Caco-2 (cell line): ENCODE measurements at regions of chr9 and their contacts with region 1.

Region 1: GRCh38 chr9:84397151-84397728 is 56.7 kb upstream of the SLC28A3 start:
- DNase-seq: peak; percentile 58 to 61
- H3K4me3 ChIP-seq: no peak overlapping the region
- H3K4me3 Mint-ChIP-seq: no peak overlapping the region
- H3K27ac Mint-ChIP-seq: no peak overlapping the region
- H3K4me1 ChIP-seq: no peaks in the 10 kb centered on the region
- H3K4me1 Mint-ChIP-seq: no peaks in the 10 kb centered on the region
- H3K27me3 ChIP-seq: no peaks in the 10 kb centered on the region
- H3K27me3 Mint-ChIP-seq: no peaks in the 10 kb centered on the region
- CTCF ChIP-seq: peak; percentile 54 to 73

Region 2: DNA sequence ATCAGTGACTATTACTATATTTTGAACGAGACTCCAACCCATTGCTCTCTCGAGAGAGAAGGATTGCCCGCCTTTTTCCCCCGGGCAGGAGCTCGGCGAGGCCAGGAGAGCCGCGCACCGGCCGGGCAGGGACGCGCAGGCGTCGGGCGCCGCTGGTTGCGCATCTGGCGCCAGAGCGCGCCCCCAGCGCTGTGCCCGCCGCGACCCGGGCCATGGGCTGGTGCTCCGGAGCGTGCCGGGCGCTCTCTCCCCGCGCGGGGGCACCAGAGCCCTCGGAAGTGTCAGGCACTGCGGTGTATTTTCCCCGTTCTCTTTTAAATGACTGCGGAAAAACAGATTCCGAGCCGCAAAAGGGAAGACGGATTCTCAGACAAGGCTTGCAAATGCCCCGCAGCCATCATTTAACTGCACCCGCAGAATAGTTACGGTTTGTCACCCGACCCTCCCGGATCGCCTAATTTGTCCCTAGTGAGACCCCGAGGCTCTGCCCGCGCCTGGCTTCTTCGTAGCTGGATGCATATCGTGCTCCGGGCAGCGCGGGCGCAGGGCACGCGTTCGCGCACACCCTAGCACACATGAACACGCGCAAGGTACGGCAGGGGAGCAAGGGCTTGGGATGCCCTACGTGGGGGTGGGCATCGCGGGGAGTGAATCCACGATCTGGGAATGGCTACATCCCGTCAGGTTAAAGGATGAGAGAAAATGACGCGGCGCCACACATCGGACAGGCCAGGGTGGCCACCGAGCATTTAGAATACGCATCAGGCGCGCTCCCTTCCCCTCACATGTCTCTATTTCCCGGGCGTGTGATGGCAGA is 271.2 kb after region 1 on chr9:
- CTCF ChIA-PET with region 1: no interaction called
- POLR2A ChIA-PET with region 1: no interaction called
- intact Hi-C with region 1: loop called (anchors 10 kb)
- DNase-seq: peak in 1 of 2 experiments; percentile 61
- H3K4me3 ChIP-seq: peak overlapping the region; percentile 10; the same call in 1 of the 2 replicates
- H3K4me3 Mint-ChIP-seq: peak overlapping the region; percentile 66
- H3K27ac Mint-ChIP-seq: no peak overlapping the region
- H3K4me1 ChIP-seq: no peaks in the 10 kb centered on the region
- H3K4me1 Mint-ChIP-seq: no peaks in the 10 kb centered on the region
- H3K27me3 ChIP-seq: no peaks in the 10 kb centered on the region
- H3K27me3 Mint-ChIP-seq: peaks cover 22% of the 10 kb centered on the region
- CTCF ChIP-seq: peak in 1 of 2 experiments; percentile 35

Region 3: GRCh38 chr9:84781458-84781857 is 384.2 kb after region 1 on chr9:
- CTCF ChIA-PET with region 1: no interaction called
- POLR2A ChIA-PET with region 1: no interaction called
- intact Hi-C with region 1: loop called (anchors 1 kb)
- DNase-seq: peak in 1 of 2 experiments; percentile 3
- H3K4me3 ChIP-seq: no peak overlapping the region
- H3K4me3 Mint-ChIP-seq: no peak overlapping the region
- H3K27ac Mint-ChIP-seq: no peak overlapping the region
- H3K4me1 ChIP-seq: no peaks in the 10 kb centered on the region
- H3K4me1 Mint-ChIP-seq: no peaks in the 10 kb centered on the region
- H3K27me3 ChIP-seq: no peaks in the 10 kb centered on the region
- H3K27me3 Mint-ChIP-seq: peaks cover 6% of the 10 kb centered on the region
- CTCF ChIP-seq: peak in 1 of 2 experiments; percentile 25

Region 4: GRCh38 chr9:85212887-85213286 is 815.6 kb after region 1 on chr9:
- CTCF ChIA-PET with region 1: no interaction called
- POLR2A ChIA-PET with region 1: no interaction called
- intact Hi-C with region 1: no loop called
- DNase-seq: no peak
- H3K4me3 ChIP-seq: no peak overlapping the region
- H3K4me3 Mint-ChIP-seq: no peak overlapping the region
- H3K27ac Mint-ChIP-seq: no peak overlapping the region
- H3K4me1 ChIP-seq: no peaks in the 10 kb centered on the region
- H3K4me1 Mint-ChIP-seq: no peaks in the 10 kb centered on the region
- H3K27me3 ChIP-seq: no peaks in the 10 kb centered on the region
- H3K27me3 Mint-ChIP-seq: peaks cover 7% of the 10 kb centered on the region
- CTCF ChIP-seq: no peak

Region 5: DNA sequence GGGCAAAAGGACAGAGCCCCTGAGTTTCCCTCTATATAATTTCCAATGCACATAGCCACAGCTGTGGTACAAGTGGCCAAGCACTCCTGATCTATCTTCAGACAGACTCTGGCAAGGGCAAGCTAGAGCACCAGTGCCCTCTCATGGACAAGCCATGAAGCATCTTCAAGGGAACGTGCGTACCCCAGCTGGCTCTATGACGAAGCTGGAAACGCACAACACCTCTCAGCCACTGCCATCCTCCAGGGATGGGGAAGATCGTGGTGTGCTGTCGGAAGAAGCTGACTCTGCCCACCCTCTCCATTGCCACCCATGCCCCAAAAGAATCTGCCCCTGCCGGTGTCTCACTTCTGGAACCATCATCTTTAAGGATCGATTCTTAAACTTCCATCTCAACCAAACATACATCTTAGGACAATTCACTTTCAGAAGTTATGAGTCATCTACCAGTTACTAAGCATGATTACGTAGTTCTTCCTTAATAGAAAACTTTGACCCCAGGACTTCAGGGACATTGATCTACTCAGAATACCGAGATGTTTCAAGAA is 861.7 kb after region 1 on chr9:
- CTCF ChIA-PET with region 1: interaction called, 5 read pairs
- POLR2A ChIA-PET with region 1: no interaction called
- intact Hi-C with region 1: loop called (anchors 2 kb)
- DNase-seq: peak; percentile 42 to 45
- H3K4me3 ChIP-seq: no peak overlapping the region
- H3K4me3 Mint-ChIP-seq: no peak overlapping the region
- H3K27ac Mint-ChIP-seq: no peak overlapping the region
- H3K4me1 ChIP-seq: no peaks in the 10 kb centered on the region
- H3K4me1 Mint-ChIP-seq: peaks cover 6% of the 10 kb centered on the region
- H3K27me3 ChIP-seq: no peaks in the 10 kb centered on the region
- H3K27me3 Mint-ChIP-seq: peaks cover 12% of the 10 kb centered on the region
- CTCF ChIP-seq: peak; percentile 47 to 60

Region 6: GRCh38 chr9:85610074-85610860 is 1213.0 kb after region 1 on chr9:
- CTCF ChIA-PET with region 1: interaction called, 11 read pairs
- POLR2A ChIA-PET with region 1: no interaction called
- intact Hi-C with region 1: no loop called
- DNase-seq: peak in 1 of 2 experiments; percentile 43
- H3K4me3 ChIP-seq: no peak overlapping the region
- H3K4me3 Mint-ChIP-seq: no peak overlapping the region
- H3K27ac Mint-ChIP-seq: no peak overlapping the region
- H3K4me1 ChIP-seq: no peaks in the 10 kb centered on the region
- H3K4me1 Mint-ChIP-seq: no peaks in the 10 kb centered on the region
- H3K27me3 ChIP-seq: no peaks in the 10 kb centered on the region
- H3K27me3 Mint-ChIP-seq: no peaks in the 10 kb centered on the region
- CTCF ChIP-seq: peak; percentile 50 to 59